ENCODE measurements at regions of chr19 and their contacts with region 1.

Region 1: DNA sequence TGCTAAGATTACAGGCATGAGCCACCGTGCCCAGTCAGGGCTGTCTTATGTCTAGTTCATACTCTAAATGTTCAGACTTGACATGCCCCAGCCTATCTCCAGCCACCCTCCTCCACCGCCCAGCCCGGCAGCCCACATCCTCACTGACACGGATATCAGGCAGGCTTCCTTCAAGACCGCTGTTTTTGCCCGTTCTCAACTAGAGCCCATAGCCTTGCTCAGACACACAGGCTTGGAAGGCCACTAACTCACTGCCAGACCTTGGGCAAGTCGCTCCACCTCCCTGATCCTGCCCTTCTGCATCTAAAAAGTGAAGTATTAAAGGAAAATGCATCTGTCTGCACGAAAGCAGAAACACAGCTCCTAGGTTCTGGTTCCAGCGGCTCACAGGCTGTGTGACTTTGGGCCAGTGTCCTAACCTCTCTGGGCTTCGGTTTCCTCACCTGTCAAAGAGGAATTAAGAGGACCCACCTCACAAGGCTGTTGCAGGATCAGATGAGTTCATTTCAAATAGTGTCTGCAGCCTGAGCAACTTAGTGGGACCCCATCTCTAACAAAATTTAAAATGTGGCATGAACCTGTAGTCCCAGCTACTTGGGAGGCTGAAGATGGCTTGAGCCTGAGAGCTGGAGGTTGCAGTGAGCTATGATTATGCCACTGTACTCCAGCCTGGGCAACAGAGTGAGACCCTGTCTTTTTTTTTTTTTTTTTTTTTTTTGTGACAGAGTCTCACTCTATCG is 14.5 kb upstream of the CERS4 start:
- DNase-seq: peak; percentile 66
- H3K4me3 Mint-ChIP-seq: no peak overlapping the region
- H3K27ac Mint-ChIP-seq: peak overlapping the region; percentile 87
- H3K4me1 Mint-ChIP-seq: peaks cover 42% of the 10 kb centered on the region
- H3K27me3 Mint-ChIP-seq: no peaks in the 10 kb centered on the region

Region 2: DNA sequence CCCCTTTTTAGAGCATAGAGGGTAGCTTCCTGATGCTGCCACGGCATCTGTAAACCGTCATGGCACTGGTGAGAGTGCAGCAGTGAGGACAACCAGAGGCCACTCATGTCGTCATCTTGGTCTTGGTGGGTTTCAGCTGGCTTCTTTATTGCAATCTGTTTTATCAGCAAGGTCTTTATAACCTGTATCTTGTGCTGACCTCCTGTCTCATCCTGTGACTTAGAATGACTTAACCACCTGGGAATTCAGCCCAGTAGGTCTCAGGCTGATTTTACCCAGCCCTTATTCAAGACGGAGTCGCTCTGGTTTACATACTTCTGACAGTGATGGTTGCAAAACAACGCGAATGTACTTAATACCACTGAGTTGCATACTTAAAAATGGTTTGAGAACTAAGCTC is 30.9 kb before region 1 on chr19:
- CTCF ChIA-PET with region 1: no interaction called
- intact Hi-C with region 1: loop called (anchors 1 kb)
- DNase-seq: no peak
- H3K4me3 Mint-ChIP-seq: no peak overlapping the region
- H3K27ac Mint-ChIP-seq: no peak overlapping the region
- H3K4me1 Mint-ChIP-seq: peaks cover 1% of the 10 kb centered on the region
- H3K27me3 Mint-ChIP-seq: no peaks in the 10 kb centered on the region

Region 3: GRCh38 chr19:8180061-8180460 is 14.6 kb before region 1 on chr19:
- CTCF ChIA-PET with region 1: no interaction called
- intact Hi-C with region 1: loop called (anchors 1 kb)
- DNase-seq: no peak
- H3K4me3 Mint-ChIP-seq: no peak overlapping the region
- H3K27ac Mint-ChIP-seq: no peak overlapping the region
- H3K4me1 Mint-ChIP-seq: peaks cover 11% of the 10 kb centered on the region
- H3K27me3 Mint-ChIP-seq: no peaks in the 10 kb centered on the region

Region 4: DNA sequence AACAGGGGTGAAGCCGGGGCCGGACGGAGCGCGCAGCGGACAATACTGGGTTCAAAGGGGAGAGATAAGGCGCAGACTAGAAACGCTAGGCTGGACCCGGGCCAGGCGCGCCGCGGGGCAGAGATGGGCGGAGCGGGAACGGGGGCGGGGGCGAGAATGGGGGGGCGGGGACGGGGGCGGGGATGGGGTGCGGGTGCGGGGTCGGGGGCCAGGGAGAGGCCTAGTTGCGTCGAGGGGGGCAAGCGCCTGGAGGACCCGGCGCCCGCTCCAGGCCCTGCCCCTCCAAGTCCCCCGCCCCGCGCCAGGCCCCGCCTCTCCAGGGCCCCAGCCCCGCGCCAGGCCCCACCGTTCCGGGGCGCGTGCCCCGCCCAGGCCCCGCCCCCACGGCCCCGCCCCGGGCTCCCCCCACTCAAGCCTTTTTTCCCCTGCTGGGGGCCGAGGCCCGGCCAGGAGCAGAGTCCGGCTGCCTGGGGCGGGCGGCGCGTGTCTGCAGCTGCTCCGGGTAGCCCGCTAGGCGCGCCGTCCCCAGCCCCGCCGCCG is 14.3 kb after region 1 on chr19 and contains the start of gene CERS4:
- CTCF ChIA-PET with region 1: no interaction called
- intact Hi-C with region 1: loop called (anchors 1 kb)
- DNase-seq: peak; percentile 73
- H3K4me3 Mint-ChIP-seq: peak within 1 kb of the TSS; percentile 92
- H3K27ac Mint-ChIP-seq: peak within 1 kb of the TSS; percentile 86
- H3K4me1 Mint-ChIP-seq: peaks cover 32% of the 10 kb centered on the region
- H3K27me3 Mint-ChIP-seq: no peaks in the 10 kb centered on the region
- total RNA-seq, gene CERS4: 15.7 to 19.4 TPM

Measured in activated naive CD4-positive, alpha-beta T cell treated with anti-CD3 and anti-CD28 coated beads for 36 hours (primary cell).